ENCODE measurements at regions of chr6 and their contacts with region 1.

Region 1: DNA sequence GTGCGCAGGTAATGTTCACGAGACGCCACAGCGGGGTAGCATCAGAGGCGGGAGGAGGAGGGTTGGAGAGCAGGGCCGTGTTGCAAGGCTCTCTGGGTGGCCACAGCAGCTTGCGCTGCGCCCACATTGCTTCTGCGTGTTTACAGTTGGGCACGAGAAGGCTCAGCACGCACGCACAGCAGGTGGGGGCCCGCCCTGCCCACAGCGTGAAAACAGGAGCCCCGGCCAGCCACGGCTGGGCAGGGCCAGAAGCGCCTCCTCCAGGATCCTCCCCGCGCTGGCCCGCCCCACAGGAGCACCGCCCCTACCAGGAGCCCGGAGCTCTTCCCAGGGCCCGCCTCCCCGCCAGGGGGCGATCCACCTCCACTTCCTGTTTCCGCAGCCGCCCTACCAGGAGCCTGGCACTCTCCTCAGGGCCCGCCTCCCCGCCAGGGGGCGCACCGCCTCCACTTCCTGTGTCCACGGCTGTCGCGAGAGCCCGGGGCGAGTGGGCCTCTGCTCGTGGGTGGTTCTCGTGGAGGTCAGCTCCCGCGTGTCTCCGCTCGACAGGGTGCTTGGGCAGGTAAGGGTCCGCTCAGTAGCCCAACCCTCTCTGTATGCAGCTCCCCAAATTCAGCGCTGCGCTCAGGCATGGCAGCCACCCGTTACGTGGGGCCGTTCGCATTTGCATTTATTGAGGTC is at the start of gene FAM50B:
- DNase-seq: peak; percentile 86
- H3K4me3 ChIP-seq: peak within 1 kb of the TSS; percentile 3 to 31 (median 12)
- H3K27ac ChIP-seq: peak within 1 kb of the TSS; percentile 21
- H3K4me1 ChIP-seq: peaks cover 4% of the 10 kb centered on the region
- H3K27me3 ChIP-seq: no peaks in the 10 kb centered on the region
- CTCF ChIP-seq: peak; percentile 87 to 92
- POLR2A ChIP-seq: peak; percentile 41
- total RNA-seq, gene FAM50B: 10.0 and 10.4 TPM in 2 replicates

Region 2: DNA sequence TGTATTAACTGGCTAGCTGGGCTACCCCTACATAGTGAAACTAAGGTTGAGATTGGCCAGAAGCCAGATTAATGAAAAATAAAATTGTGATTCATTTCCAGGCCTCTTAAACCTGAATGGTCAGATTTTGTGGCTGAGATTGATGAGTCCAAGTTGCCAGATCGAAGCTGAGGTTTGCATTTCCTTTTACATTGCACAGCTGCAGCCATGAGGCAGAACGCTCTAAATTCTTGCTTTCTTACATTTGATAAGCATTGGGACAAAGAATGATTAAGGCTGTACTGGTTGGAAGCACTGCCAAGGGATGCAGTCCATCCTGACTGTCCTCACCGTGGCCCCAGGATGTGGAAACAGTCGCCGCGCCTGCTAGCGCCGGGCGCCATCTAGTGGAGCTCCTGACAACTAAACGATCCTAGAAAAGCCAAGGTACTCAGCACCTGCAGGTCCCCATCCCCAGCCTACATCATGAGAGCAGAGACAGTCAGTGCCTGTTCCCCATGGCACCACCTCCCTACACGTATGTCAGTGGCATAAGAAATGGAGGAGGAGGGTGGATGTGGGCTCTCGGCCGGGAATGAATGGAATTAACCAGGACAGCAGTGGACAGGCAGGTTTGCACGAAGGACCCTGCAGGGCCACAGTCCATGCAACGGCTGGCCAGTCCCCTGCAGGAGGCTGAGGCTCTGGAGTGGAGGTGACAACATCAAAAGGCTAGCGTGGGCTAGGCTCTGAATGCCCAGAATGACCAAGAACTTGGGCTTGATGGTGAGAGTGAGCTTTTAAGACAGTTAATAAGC is 116.5 kb before region 1 on chr6:
- CTCF ChIA-PET with region 1: interaction called, 13 read pairs
- POLR2A ChIA-PET with region 1: no interaction called
- dilution Hi-C with region 1: no loop called
- intact Hi-C with region 1: no loop called
- DNase-seq: peak; percentile 88
- H3K4me3 ChIP-seq: no peak overlapping the region
- H3K27ac ChIP-seq: no peak overlapping the region
- H3K4me1 ChIP-seq: peaks cover 40% of the 10 kb centered on the region
- H3K27me3 ChIP-seq: no peaks in the 10 kb centered on the region
- CTCF ChIP-seq: peak; percentile 79 to 84
- POLR2A ChIP-seq: peak; percentile 22

Region 3: DNA sequence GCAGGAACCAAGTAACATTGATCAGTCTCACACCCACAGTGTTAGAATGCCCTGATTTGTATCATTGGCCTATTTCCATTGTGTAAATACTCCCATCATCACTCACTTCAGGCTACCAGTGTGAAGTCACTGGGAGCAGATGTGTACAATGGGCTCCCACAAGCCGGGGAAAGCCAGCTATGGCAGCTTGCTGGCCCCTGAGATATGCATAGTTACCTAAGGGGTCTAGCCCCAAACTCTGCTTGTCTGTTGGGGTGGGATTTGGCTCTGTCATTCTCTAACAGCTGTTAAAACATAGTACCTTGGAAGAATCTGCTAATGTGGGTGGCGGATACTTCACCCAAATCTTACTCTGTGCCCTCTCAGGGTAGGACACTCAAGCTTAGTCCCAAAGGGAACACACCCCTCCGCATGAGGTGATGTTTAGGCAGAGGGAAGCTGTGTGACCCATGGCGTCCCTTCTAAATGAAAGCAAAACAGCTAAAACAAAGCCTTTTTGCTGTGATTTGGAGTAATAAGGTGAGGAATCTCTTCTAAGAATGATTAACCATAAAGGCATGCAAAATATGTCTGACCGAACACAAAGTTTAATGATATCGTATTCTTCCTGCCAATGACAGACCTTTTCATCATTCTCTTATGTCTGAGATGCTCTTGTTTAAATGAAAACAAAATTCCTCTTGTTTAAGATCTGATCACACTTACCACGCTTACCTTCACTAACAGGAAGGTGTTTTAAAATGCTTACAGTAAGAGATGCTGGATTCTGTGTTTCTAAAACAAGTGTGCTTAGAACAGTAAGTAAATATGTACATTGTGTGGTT is 51.6 kb before region 1 on chr6:
- CTCF ChIA-PET with region 1: interaction called, 48 read pairs
- POLR2A ChIA-PET with region 1: no interaction called
- dilution Hi-C with region 1: no loop called
- intact Hi-C with region 1: loop called (anchors 1 kb)
- DNase-seq: peak; percentile 83
- H3K4me3 ChIP-seq: no peak overlapping the region
- H3K27ac ChIP-seq: peak overlapping the region; percentile 100
- H3K4me1 ChIP-seq: peaks cover 39% of the 10 kb centered on the region
- H3K27me3 ChIP-seq: no peaks in the 10 kb centered on the region
- CTCF ChIP-seq: no peak
- POLR2A ChIP-seq: peak; percentile 58

Region 4: GRCh38 chr6:3835055-3835731 is 13.9 kb before region 1 on chr6:
- CTCF ChIA-PET with region 1: interaction called, 34 read pairs
- POLR2A ChIA-PET with region 1: no interaction called
- dilution Hi-C with region 1: no loop called
- intact Hi-C with region 1: no loop called
- DNase-seq: no peak
- H3K4me3 ChIP-seq: no peak overlapping the region
- H3K27ac ChIP-seq: no peak overlapping the region
- H3K4me1 ChIP-seq: peaks cover 15% of the 10 kb centered on the region
- H3K27me3 ChIP-seq: no peaks in the 10 kb centered on the region
- CTCF ChIP-seq: no peak
- POLR2A ChIP-seq: no peak

Region 5: GRCh38 chr6:3887150-3887700 is 38.2 kb after region 1 on chr6:
- CTCF ChIA-PET with region 1: interaction called, 56 read pairs
- POLR2A ChIA-PET with region 1: no interaction called
- dilution Hi-C with region 1: no loop called
- intact Hi-C with region 1: loop called (anchors 2 kb)
- DNase-seq: peak; percentile 67
- H3K4me3 ChIP-seq: no peak overlapping the region
- H3K27ac ChIP-seq: no peak overlapping the region
- H3K4me1 ChIP-seq: peaks cover 19% of the 10 kb centered on the region
- H3K27me3 ChIP-seq: no peaks in the 10 kb centered on the region
- CTCF ChIP-seq: peak; percentile 45 to 62
- POLR2A ChIP-seq: no peak

Region 6: DNA sequence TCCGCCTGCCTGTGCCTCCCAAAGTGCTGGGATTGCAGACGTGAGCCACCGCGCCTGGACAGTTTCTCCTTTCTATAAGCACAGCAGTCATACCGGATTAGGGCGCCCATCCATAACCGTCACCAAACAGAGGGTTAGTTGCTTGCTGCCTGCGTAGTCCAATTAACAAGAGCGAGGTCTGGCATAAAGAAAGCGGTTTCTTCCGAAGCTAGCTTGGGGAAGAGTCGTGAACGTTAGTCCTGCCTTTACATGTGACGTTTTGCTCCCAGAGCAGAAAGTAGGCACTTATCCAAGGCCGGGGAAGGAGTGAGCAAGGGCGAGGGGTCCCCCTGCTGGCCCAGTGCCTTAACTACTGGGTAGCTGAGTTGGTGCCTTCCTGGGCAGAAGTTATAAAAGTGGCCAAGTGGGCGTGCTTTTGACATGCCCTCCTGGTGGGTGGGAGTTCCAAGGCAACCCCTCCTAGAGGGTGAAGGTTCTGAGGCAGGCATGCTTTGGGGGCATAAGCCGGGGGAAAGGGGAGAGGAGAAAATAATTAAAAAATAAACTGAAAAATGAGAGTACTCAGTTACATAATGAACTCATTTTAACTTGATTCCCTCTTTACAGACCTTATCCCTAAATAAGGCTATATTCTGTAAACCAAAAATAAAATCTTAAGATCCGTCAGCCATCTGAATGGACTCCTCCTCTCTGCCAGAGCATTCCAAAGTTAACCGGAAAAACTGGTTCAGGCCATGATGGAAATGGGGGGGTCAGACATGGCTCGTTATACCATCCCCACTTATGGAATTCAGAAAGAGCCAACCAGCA is 141.8 kb after region 1 on chr6:
- CTCF ChIA-PET with region 1: interaction called, 60 read pairs
- POLR2A ChIA-PET with region 1: no interaction called
- dilution Hi-C with region 1: no loop called
- intact Hi-C with region 1: loop called (anchors 1 kb)
- DNase-seq: peak; percentile 91
- H3K4me3 ChIP-seq: no peak overlapping the region
- H3K27ac ChIP-seq: no peak overlapping the region
- H3K4me1 ChIP-seq: peaks cover 17% of the 10 kb centered on the region
- H3K27me3 ChIP-seq: no peaks in the 10 kb centered on the region
- CTCF ChIP-seq: peak; percentile 92 to 94
- POLR2A ChIP-seq: no peak

Region 7: GRCh38 chr6:4049246-4049645 is 200.2 kb after region 1 on chr6:
- CTCF ChIA-PET with region 1: no interaction called
- POLR2A ChIA-PET with region 1: no interaction called
- dilution Hi-C with region 1: no loop called
- intact Hi-C with region 1: no loop called
- DNase-seq: peak; percentile 72
- H3K4me3 ChIP-seq: no peak overlapping the region
- H3K27ac ChIP-seq: peak overlapping the region; percentile 39
- H3K4me1 ChIP-seq: peaks cover 9% of the 10 kb centered on the region
- H3K27me3 ChIP-seq: no peaks in the 10 kb centered on the region
- CTCF ChIP-seq: no peak
- POLR2A ChIP-seq: no peak

Measured in endothelial cell of umbilical vein (primary cell).